T-cell (primary cell): ENCODE measurements at regions of chr18 and their contacts with region 1.

Region 1: DNA sequence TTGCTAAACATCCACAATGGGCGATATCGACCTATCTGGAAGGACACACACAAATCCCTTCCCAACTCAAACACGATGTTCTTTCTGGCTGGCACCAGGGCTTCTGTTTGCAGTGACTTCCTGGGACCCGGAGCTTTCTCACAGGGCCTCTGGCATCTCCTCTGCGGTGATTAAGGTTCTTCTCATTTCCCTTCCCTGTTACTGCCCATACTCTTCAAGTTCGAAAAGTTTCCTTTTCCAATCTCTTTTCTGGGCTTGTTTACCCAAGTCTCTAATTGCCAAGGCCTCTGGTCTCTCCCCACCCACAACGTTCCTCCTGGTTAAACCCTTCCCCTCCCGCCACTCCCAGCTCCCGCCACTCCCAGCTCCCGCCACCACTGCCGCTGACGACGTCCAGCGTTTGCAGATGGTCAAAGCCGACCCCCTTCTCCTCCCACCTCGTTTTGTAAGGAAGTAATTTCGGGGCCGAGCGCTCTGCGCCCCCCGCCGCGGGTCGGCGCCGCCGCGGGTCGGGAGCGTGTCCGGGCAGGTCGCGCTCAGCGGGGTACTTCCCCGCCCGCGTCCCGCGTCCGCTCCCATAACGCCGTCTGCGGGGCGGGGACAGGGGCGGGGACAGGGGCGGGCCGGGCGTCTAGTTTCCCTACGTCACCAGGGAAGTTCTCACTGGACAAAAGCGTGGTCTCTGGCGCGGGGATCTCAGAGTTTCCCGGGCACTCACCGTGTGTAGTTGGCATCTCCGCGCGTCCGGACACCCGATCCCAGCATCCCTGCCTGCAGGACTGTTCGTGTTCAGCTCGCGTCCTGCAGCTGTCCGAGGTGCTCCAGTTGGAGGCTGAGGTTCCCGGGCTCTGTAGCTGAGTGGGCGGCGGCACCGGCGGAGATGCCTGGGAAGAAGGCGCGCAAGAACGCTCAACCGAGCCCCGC is at the start of gene PMAIP1:
- DNase-seq: peak; percentile 66 to 90 (median 77)
- ATAC-seq: peak; percentile 86 to 91 (median 88)
- H3K4me3 ChIP-seq: peak within 1 kb of the TSS; percentile 91 to 97
- H3K4me3 Mint-ChIP-seq: peak within 1 kb of the TSS; percentile 90 to 97 (median 95)
- H3K27ac ChIP-seq: peak within 1 kb of the TSS; percentile 86
- H3K27ac Mint-ChIP-seq: peak within 1 kb of the TSS; percentile 96
- H3K4me1 ChIP-seq: peaks cover 7 to 21% of the 10 kb centered on the region in 2 experiments
- H3K4me1 Mint-ChIP-seq: peaks cover 38 to 43% (median 39%) of the 10 kb centered on the region in 3 donors
- H3K27me3 ChIP-seq: no peaks in the 10 kb centered on the region
- H3K27me3 Mint-ChIP-seq: no peaks in the 10 kb centered on the region
- total RNA-seq, gene PMAIP1: 17.8 to 81.5 (median 20.4) TPM

Region 2: DNA sequence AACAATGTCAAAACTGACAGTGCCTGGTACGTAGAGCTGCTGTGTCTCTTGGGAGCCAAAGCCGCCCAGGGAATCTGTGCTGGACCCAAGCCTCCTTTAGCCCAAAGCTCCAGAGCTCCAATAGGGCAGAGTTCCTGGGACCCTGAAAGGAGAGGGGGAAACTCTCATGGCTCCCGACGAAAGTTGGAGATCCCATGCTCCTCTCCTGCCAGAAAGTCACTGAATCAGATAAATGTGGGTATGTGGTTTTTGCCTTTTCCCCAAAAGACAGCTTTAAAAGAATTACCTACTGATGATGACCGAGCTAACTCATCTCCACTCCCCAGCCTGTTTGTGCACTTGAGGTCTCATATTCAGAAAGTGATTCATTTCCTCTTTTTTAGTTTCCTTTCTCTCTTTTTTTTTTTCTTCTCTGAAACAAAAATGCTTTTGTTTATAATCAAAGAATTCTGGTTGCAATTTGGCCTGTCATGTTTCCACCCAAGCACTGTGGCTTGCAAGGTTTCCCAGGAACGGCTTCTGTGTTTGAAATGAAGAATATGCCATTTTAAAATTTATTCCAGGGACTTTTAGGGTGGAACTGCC is 13.9 kb before region 1 on chr18:
- CTCF ChIA-PET with region 1: no interaction called
- POLR2A ChIA-PET with region 1: interaction called in 1 of 2 experiments, 10 read pairs
- DNase-seq: peak in 10 of 35 experiments; percentile 4 to 45 (median 14)
- ATAC-seq: peak; percentile 40 to 79 (median 62)
- H3K4me3 ChIP-seq: no peak overlapping the region
- H3K4me3 Mint-ChIP-seq: peak overlapping the region in 2 of 3 donors; percentile 13 to 18
- H3K27ac ChIP-seq: peak overlapping the region; percentile 33
- H3K27ac Mint-ChIP-seq: peak overlapping the region; percentile 70 to 83
- H3K4me1 ChIP-seq: peaks cover 7 to 22% of the 10 kb centered on the region in 2 experiments
- H3K4me1 Mint-ChIP-seq: peaks cover 25 to 35% (median 27%) of the 10 kb centered on the region in 3 donors
- H3K27me3 ChIP-seq: no peaks in the 10 kb centered on the region
- H3K27me3 Mint-ChIP-seq: no peaks in the 10 kb centered on the region

Region 3: GRCh38 chr18:60053747-60054304 is 154.3 kb after region 1 on chr18:
- CTCF ChIA-PET with region 1: no interaction called
- POLR2A ChIA-PET with region 1: no interaction called
- DNase-seq: no peak
- ATAC-seq: no peak
- H3K4me3 ChIP-seq: no peak overlapping the region
- H3K4me3 Mint-ChIP-seq: no peak overlapping the region
- H3K27ac ChIP-seq: no peak overlapping the region
- H3K27ac Mint-ChIP-seq: no peak overlapping the region
- H3K4me1 ChIP-seq: no peaks in the 10 kb centered on the region
- H3K4me1 Mint-ChIP-seq: no peaks in the 10 kb centered on the region
- H3K27me3 ChIP-seq: peaks cover 0 to 2% of the 10 kb centered on the region in 2 experiments
- H3K27me3 Mint-ChIP-seq: peaks cover 0 to 4% of the 10 kb centered on the region in 2 donors

Region 4: GRCh38 chr18:60064271-60064670 is 164.7 kb after region 1 on chr18:
- CTCF ChIA-PET with region 1: no interaction called
- POLR2A ChIA-PET with region 1: no interaction called
- DNase-seq: no peak
- ATAC-seq: no peak
- H3K4me3 ChIP-seq: no peak overlapping the region
- H3K4me3 Mint-ChIP-seq: no peak overlapping the region
- H3K27ac ChIP-seq: no peak overlapping the region
- H3K27ac Mint-ChIP-seq: no peak overlapping the region
- H3K4me1 ChIP-seq: no peaks in the 10 kb centered on the region
- H3K4me1 Mint-ChIP-seq: no peaks in the 10 kb centered on the region
- H3K27me3 ChIP-seq: no peaks in the 10 kb centered on the region
- H3K27me3 Mint-ChIP-seq: peaks cover 0 to 6% of the 10 kb centered on the region in 2 donors

Region 5: GRCh38 chr18:60163622-60164021 is 264.1 kb after region 1 on chr18:
- CTCF ChIA-PET with region 1: no interaction called
- POLR2A ChIA-PET with region 1: no interaction called
- DNase-seq: no peak
- ATAC-seq: no peak
- H3K4me3 ChIP-seq: no peak overlapping the region
- H3K4me3 Mint-ChIP-seq: no peak overlapping the region
- H3K27ac ChIP-seq: no peak overlapping the region
- H3K27ac Mint-ChIP-seq: no peak overlapping the region
- H3K4me1 ChIP-seq: no peaks in the 10 kb centered on the region
- H3K4me1 Mint-ChIP-seq: no peaks in the 10 kb centered on the region
- H3K27me3 ChIP-seq: no peaks in the 10 kb centered on the region
- H3K27me3 Mint-ChIP-seq: no peaks in the 10 kb centered on the region